Gastrocnemius medialis (tissue), 4 donors: ENCODE measurements at regions of chr1 and their contacts with region 1.

Region 1: GRCh38 chr1:13517193-13517812 is 3.5 kb upstream of the LRRC38 start:
- DNase-seq: peak in 1 of 2 donors; percentile 49
- ATAC-seq: no peak
- H3K4me3 ChIP-seq: no peak overlapping the region
- H3K27ac ChIP-seq: peak overlapping the region in 1 of 4 donors; percentile 95
- H3K4me1 ChIP-seq: peaks cover 5% of the 10 kb centered on the region in 2 donors
- H3K27me3 ChIP-seq: no peaks in the 10 kb centered on the region
- CTCF ChIP-seq: peak in 4 of 5 experiments; percentile 31 to 55 (median 40)
- POLR2A ChIP-seq: no peak

Region 2: DNA sequence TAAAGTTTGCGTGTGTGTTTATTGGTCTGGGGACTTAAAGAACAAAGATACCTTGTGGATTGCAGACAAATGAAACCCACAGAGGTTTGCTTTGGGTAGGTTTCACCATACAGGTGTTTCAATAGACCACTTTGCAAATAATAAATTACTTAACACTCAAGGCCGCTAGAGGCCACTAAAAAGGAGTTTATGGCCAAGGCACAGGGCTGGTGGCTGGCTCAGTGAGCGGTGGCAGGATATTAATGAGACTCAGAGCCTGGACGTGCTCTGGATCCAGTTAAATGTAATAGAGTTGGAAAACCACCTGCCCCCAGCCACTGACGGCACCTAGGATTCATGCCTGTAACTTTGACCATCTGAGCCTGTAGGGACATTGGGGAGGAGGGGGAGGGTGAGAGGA is 48.0 kb before region 1 on chr1:
- in situ Hi-C with region 1: no loop called
- intact Hi-C with region 1: loop called (anchors 2 kb)
- DNase-seq: peak in 1 of 2 donors; percentile 66
- ATAC-seq: peak; percentile 82 to 88
- H3K4me3 ChIP-seq: no peak overlapping the region
- H3K27ac ChIP-seq: peak overlapping the region; percentile 2 to 70 (median 60)
- H3K4me1 ChIP-seq: peaks cover 0 to 2% of the 10 kb centered on the region in 2 donors
- H3K27me3 ChIP-seq: no peaks in the 10 kb centered on the region
- CTCF ChIP-seq: peak; percentile 36 to 54 (median 43)
- POLR2A ChIP-seq: no peak

Region 3: GRCh38 chr1:13535227-13535626 is 17.9 kb after region 1 on chr1:
- in situ Hi-C with region 1: no loop called
- intact Hi-C with region 1: no loop called
- DNase-seq: peak; percentile 57 to 76
- ATAC-seq: peak; percentile 97 to 98
- H3K4me3 ChIP-seq: no peak overlapping the region
- H3K27ac ChIP-seq: peak overlapping the region; percentile 67 to 81 (median 73)
- H3K4me1 ChIP-seq: peaks cover 11% of the 10 kb centered on the region in 2 donors
- H3K27me3 ChIP-seq: no peaks in the 10 kb centered on the region
- CTCF ChIP-seq: no peak
- POLR2A ChIP-seq: no peak

Region 4: GRCh38 chr1:13792419-13792818 is 275.1 kb after region 1 on chr1:
- in situ Hi-C with region 1: no loop called
- intact Hi-C with region 1: loop called (anchors 10 kb)
- DNase-seq: peak in 1 of 2 donors; percentile 24
- ATAC-seq: peak; percentile 87 to 94
- H3K4me3 ChIP-seq: no peak overlapping the region
- H3K27ac ChIP-seq: peak overlapping the region; percentile 78 to 90 (median 88)
- H3K4me1 ChIP-seq: peaks cover 66 to 75% of the 10 kb centered on the region in 2 donors
- H3K27me3 ChIP-seq: no peaks in the 10 kb centered on the region
- CTCF ChIP-seq: no peak
- POLR2A ChIP-seq: no peak

Region 5: DNA sequence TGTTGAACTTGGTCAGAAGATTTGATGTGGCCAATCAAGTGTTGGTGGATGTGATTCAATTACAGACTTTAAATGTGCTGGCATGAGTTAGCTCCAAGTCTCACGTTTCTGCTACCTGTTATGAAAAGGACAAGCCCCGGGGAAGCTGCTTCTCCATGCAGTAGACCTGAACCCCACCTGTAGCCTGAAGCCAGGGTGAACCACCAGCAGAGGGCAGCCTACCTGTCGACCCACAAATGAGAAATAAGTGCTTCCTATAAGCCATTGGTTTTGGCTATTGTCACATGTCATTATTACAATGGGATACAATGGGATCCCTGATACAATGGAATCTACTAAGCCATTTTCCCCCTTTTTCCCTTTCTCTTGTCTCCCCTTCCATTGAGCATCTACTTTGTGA is 412.8 kb after region 1 on chr1:
- in situ Hi-C with region 1: no loop called
- intact Hi-C with region 1: no loop called
- DNase-seq: no peak
- ATAC-seq: no peak
- H3K4me3 ChIP-seq: no peak overlapping the region
- H3K27ac ChIP-seq: no peak overlapping the region
- H3K4me1 ChIP-seq: no peaks in the 10 kb centered on the region
- H3K27me3 ChIP-seq: no peaks in the 10 kb centered on the region
- CTCF ChIP-seq: no peak
- POLR2A ChIP-seq: no peak